Pancreas (tissue), 10 donors: ENCODE measurements at regions of chr17 and their contacts with region 1.

Region 1: GRCh38 chr17:31015639-31016038 is 44.8 kb downstream of the RNF135 start:
- DNase-seq: no peak
- ATAC-seq: no peak
- H3K4me3 ChIP-seq: no peak overlapping the region
- H3K27ac ChIP-seq: no peak overlapping the region
- H3K4me1 ChIP-seq: no peaks in the 10 kb centered on the region
- H3K27me3 ChIP-seq: no peaks in the 10 kb centered on the region
- CTCF ChIP-seq: no peak

Region 2: GRCh38 chr17:30805944-30806456 is 209.6 kb before region 1 on chr17:
- intact Hi-C with region 1: no loop called
- DNase-seq: no peak
- ATAC-seq: no peak
- H3K4me3 ChIP-seq: no peak overlapping the region
- H3K27ac ChIP-seq: no peak overlapping the region
- H3K4me1 ChIP-seq: no peaks in the 10 kb centered on the region
- H3K27me3 ChIP-seq: no peaks in the 10 kb centered on the region
- CTCF ChIP-seq: no peak

Region 3: DNA sequence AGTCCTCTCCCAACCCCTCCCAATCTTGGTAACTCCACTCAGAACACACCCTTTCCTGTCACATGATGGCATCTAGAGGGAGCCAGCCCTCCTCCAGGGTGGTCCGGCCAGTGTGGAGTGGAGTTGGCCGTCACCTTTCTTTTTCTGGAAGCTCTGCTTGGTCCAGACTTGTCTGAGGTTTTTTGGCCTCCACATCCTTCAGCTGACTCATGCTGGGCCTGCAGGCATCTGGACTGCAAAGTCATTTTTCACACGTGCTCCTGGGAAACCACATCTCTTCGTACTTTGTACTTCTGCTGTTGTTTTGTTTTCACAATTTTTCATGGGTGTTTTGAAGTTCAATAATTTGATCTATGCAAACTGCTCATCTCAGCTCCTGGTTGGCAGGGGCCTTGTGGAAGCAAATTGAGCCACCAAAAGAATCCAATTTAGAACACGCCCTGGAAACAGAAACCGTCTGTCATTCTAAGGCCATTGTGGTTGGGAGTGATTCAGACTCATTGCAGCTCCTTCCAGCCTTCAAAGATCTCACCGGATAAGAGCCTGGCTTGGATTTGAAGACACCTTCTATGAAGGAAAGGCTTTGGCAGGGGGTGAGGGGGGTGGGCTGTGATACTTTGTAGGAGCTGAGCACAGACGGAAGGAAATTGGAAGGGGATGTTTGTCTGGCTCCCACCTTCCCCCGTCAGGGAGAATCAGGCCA is 36.7 kb after region 1 on chr17:
- intact Hi-C with region 1: no loop called
- DNase-seq: peak in 3 of 6 donors; percentile 23 to 45 (median 43)
- ATAC-seq: peak; percentile 71 to 86 (median 80)
- H3K4me3 ChIP-seq: no peak overlapping the region
- H3K27ac ChIP-seq: peak overlapping the region in 1 of 4 donors; percentile 11
- H3K4me1 ChIP-seq: no peaks in the 10 kb centered on the region
- H3K27me3 ChIP-seq: no peaks in the 10 kb centered on the region
- CTCF ChIP-seq: no peak

Region 4: GRCh38 chr17:31074772-31075555 is 59.3 kb after region 1 on chr17:
- intact Hi-C with region 1: no loop called
- DNase-seq: no peak
- ATAC-seq: no peak
- H3K4me3 ChIP-seq: no peak overlapping the region
- H3K27ac ChIP-seq: no peak overlapping the region
- H3K4me1 ChIP-seq: no peaks in the 10 kb centered on the region
- H3K27me3 ChIP-seq: no peaks in the 10 kb centered on the region
- CTCF ChIP-seq: no peak

Region 5: DNA sequence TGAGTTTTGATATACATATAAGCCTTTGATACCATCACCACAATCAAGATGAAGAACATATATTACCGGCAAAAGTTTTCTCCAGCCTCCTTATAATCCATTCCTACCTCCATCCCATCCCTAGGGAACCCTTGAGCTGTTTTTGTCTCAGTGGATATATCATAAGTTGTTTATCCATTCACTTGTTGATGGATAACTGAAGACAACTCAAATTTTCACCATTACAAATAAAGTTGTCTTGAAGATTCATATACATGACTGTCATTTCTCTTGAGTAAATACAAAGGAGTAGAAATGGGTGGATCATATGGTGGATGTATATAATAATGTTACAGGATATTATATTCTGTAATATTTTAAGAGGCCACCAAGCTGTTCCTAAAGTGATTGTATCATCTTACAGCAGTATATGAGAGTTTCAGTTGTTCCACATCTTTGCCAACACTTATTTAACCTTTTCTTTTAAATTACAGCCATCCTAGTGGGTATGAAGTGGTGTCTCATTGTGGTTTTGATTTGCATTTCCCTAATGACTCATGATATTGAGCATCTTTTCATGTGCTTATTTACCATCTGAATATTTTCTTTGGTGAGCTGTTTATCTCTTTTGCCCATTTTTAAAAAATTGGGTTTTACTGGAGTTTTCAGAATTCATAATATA is 96.5 kb after region 1 on chr17:
- intact Hi-C with region 1: no loop called
- DNase-seq: no peak
- ATAC-seq: no peak
- H3K4me3 ChIP-seq: no peak overlapping the region
- H3K27ac ChIP-seq: no peak overlapping the region
- H3K4me1 ChIP-seq: peaks cover 0 to 3% (median 0%) of the 10 kb centered on the region in 3 donors
- H3K27me3 ChIP-seq: no peaks in the 10 kb centered on the region
- CTCF ChIP-seq: no peak

Region 6: DNA sequence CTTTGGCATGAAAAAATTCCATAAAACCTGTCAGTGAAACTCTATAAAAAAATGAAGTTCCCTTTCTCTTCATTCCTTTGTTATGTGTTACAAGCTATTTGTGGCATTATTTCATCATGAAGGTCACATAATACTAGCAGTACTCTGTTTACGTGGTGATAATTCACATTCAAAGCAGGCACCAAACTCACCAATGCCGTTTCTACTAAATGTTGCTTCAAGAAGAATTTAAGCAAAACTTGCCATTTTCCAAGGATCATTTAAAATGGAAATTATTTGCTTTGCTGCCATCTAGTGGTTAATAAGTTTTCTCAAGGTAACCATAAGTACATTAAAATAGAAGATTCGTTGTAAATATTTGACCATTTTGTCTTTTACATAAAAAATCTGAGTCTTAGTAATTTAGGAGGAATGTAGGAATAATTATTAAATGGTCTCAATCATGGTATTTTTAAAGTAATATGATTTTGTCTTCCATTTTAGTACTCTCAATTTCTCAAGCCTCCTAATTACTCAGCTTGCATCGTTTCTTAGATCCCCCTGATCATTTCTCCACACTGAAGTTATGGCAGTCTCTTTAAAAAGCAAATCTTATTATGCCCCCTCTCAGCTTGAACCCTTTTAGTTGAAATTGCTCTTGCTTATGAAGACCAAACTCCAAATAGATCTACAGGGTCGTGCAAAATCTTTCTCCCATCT is 200.6 kb after region 1 on chr17:
- intact Hi-C with region 1: loop called in 1 of 3 experiments (anchors 10 kb)
- DNase-seq: no peak
- ATAC-seq: peak; percentile 40 to 56 (median 50)
- H3K4me3 ChIP-seq: no peak overlapping the region
- H3K27ac ChIP-seq: no peak overlapping the region
- H3K4me1 ChIP-seq: no peaks in the 10 kb centered on the region
- H3K27me3 ChIP-seq: no peaks in the 10 kb centered on the region
- CTCF ChIP-seq: peak; percentile 22 to 61 (median 38)